ENCODE measurements at regions of chr5 and their contacts with region 1.

Region 1: DNA sequence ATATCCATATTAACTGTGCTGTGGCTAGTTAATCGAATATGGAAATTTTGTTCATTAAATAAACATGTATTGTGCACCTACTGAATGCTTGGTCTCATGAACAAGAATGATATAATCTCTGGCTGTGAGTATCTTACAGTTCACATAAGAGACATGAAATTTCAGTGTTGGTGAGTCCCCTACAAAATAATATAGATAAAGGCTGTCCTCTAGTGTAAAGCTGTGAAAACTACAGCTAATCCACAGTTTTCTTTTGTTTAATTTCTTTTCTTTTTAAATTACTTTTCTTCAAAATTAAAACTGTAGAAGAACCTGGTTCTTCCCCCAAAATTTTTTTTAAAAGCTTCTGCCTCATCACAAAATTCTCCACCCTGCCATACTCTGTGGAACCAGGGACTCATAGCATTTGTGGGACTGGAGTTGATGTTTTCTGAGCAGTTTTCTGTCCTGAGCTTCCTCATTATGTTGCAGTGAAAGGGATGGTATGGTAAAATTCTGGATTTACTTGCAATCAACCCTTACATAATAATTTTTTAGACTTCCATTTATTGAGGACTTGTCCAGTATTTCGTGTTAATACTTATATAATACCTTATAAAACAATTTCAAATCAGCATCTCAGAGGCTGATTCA is 135.0 kb downstream of the STK32A start:
- DNase-seq: peak in 2 of 5 donors; percentile 35 to 46
- H3K4me3 ChIP-seq: no peak overlapping the region
- H3K27ac ChIP-seq: no peak overlapping the region
- H3K4me1 ChIP-seq: no peaks in the 10 kb centered on the region
- H3K27me3 ChIP-seq: no peaks in the 10 kb centered on the region
- CTCF ChIP-seq: peak; percentile 65

Region 2: DNA sequence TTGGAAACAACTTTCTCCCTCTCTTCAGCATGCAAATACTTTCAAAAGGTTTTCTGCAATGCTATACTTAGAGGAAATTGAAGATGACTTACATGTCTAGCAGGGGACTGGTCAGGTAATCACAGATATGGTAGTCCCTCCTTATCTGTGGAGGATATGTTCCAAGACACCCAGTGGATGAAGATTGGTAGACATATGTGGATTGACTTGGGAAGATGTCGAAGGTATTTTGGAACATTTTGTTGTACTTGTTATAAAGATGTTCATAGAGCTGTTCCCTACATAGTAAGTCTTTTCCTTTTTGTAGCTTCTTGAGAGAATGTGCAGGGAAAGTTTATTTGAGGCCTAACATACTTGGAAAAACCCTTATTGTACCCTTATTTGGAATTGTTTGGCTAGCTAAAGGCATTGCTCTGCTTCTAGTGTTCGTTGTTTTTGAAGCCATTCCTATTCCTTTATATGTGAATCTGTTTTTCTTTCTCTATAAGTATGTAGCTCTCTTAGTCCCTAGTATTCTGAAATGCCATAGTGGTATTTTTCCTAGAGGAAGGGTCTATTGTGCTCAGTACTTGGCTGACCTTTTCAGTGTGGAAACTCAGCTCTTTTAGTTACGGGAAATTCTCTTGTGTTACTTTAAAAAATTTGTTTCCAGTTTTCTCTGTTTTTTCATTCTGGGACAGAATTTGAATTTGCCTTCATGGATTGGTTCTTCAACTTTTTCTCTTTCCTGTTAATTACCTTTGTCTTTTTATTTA is 879.6 kb before region 1 on chr5:
- intact Hi-C with region 1: no loop called
- DNase-seq: no peak
- H3K4me3 ChIP-seq: no peak overlapping the region
- H3K27ac ChIP-seq: no peak overlapping the region
- H3K4me1 ChIP-seq: no peaks in the 10 kb centered on the region
- H3K27me3 ChIP-seq: no peaks in the 10 kb centered on the region
- CTCF ChIP-seq: no peak

Region 3: DNA sequence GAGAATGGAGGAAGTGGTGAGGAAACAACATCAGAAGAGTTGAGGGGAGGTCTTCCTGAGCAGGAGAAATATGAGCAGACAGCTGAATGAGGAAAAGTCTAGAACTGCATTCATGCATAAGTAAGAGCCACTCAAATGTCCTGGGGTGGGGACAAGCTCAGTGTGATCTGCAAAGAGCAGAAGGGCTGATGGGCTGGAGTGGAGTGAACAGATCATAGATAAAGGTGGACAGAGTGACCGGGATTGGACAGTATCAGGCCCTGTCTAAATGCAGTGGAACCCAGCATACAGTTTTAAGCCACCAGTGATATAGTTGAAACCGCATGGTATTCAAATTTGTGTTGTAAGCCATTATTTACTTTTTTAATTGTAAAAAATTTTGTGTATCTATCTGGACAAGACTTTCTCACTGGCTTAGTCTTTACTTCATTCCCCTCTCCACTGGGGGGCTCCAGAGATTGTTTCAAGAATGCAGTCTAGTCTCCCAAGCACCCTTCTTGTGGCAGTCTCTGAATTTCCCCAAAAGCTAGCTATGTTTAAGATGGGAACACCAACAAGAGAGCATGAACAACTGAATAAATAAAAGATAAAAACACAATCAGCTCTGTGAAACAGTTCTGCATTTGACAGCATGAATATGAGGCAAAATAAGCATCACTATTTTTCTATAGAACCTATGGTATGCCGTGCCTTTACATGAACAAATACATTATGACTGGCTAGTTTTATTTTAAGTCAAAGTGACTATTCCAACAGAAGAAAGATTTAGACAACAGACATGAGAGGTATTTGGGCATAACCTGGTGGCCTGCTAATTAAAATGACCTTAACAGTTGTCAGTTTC is 145.7 kb before region 1 on chr5:
- intact Hi-C with region 1: loop called (anchors 10 kb)
- DNase-seq: peak in 3 of 5 donors; percentile 33 to 79 (median 58)
- H3K4me3 ChIP-seq: no peak overlapping the region
- H3K27ac ChIP-seq: no peak overlapping the region
- H3K4me1 ChIP-seq: no peaks in the 10 kb centered on the region
- H3K27me3 ChIP-seq: no peaks in the 10 kb centered on the region
- CTCF ChIP-seq: peak; percentile 49

Measured in kidney (tissue), 22 donors.